ENCODE measurements at regions of chr17 and their contacts with region 1.

Region 1: DNA sequence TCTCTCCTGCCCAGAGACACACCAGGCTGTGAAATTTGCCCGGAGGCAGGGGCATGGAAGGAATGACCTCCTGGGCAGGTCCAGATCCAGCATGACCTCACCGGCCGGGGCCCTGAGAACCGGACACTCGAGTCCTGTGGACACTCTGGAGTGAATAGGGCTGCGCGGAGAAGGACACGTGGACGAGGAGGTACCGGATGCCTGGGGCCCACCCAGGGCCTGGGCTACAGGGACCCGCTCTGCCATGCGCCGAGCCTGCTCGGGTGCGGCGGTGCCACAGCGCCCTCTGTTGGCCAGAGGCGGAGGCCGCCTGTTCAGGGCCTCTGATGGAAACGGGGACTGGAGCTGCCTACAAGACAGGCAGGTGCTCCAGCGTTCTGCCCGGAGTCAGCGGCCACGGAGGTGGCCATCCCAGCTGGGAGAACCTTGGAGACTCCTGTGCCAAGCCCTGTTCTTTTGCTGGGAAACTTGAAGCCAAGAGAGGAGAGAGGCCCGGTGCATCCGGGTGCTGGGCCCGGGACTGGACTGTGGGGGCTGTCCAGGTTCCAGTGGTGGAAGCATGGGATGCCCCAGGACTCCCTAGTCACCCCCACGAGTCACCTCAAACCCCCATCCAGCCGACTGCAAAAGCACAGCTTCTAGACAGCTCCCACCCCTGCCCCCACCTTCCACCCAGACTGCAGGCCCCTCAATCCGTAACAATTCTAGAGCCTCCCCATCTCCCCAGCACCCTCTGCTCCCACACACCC is 19.3 kb upstream of the NXPH3 start:
- DNase-seq: peak; percentile 72
- H3K4me3 ChIP-seq: no peak overlapping the region
- H3K27ac ChIP-seq: no peak overlapping the region
- H3K4me1 ChIP-seq: no peaks in the 10 kb centered on the region
- H3K27me3 ChIP-seq: no peaks in the 10 kb centered on the region
- CTCF ChIP-seq: peak; percentile 99

Region 2: DNA sequence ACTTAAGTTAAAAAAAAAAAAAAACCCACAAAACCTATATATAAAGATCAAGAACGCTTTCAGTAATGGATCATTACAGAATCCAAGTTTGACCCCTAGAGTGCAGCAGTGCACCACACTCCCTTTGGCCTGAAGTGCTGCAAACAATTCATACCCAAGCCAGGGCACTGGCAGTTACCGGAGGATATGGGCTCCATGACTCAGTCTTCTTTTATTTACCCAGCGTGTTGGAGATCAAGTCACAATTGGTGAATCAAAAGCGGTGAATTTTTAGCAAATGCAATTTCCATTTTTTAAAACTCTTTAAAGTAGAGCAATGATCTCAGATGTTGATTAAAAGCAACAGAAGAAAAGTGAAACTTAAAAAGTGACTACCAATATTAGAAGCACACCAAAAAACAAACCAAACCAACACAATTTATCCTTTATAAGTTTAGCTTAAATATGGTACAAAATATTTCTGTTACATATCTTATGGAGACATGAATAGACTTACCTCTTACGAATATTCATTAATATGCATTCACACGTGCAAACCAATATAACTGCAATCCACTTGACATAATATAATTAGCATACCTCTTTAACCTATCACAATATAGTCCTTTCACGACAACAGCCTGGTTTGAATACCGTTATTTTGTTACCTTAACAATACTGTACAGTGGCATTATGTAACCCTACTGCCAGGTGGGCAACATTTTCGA is 240.7 kb before region 1 on chr17:
- intact Hi-C with region 1: loop called (anchors 10 kb)
- DNase-seq: peak; percentile 80
- H3K4me3 ChIP-seq: no peak overlapping the region
- H3K27ac ChIP-seq: no peak overlapping the region
- H3K4me1 ChIP-seq: peaks cover 6% of the 10 kb centered on the region
- H3K27me3 ChIP-seq: no peaks in the 10 kb centered on the region
- CTCF ChIP-seq: peak; percentile 65

Region 3: DNA sequence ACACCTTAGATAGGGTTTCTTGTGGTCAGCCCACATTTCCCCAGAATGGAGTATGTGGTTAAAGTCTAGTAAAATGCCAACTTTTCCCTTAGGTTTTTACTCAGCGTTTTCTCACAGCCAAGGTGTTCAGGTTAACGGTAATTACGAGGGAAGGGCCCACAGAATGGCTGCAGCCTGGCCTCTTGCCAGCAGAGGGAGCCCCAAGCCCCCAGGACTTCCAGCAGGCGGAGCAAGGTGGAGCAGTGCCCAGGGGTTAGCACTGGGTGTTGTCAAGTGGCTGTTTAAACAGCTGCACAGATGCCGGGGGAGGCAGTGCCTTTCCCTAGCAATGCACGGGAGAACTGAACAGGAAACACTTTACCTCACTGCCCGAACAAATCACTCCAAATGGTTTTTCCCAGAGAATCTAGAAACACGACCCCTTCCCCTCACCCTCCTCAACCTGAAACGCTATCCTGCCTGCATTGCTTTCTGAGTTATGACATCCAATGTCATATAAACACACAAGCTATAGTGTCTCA is 148.4 kb before region 1 on chr17:
- intact Hi-C with region 1: loop called (anchors 2 kb)
- DNase-seq: peak; percentile 91
- H3K4me3 ChIP-seq: no peak overlapping the region
- H3K27ac ChIP-seq: peak overlapping the region; percentile 60
- H3K4me1 ChIP-seq: peaks cover 8% of the 10 kb centered on the region
- H3K27me3 ChIP-seq: no peaks in the 10 kb centered on the region
- CTCF ChIP-seq: peak; percentile 86

Region 4: DNA sequence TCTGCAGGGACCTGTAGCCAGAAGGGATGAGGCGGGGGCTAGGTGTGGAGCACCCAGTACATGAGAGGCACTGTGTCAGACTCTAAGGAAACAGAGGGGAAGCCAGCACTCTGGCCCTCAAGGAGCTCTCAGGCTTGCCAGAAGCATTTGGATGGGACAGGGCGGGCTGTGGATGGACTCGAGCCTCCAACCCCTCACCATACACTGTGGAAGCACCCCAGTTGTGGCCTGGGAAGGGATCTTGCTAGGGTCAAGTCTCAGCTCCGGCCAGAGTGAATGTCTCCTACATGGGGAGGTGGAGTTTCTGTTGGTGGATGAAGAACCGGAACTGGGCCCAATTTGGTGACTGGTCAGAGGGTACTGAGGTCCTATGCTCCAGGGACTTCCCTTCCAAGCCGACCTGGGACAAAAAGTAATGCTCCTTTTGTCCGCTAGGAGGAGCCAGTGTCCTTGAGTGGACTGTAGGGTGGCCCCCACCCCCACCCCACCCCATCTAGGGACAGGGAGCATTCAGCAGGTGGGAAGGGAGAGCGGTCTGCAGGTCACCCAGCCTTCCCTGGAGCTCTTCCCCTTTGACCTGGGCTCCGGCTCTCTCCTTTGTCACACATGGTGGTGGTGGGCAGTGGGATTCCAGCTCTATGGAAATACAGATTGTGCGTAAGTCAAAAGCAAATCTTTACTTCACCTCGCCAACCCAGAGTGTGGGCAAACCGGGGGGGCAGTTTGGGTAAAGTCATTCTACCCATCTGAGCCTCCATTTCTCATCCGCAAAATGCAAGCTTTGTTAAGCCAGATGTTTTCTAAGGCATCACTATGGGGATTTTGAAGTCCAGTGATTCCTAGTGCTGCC is 121.4 kb before region 1 on chr17:
- intact Hi-C with region 1: loop called (anchors 2 kb)
- DNase-seq: peak; percentile 48
- H3K4me3 ChIP-seq: no peak overlapping the region
- H3K27ac ChIP-seq: no peak overlapping the region
- H3K4me1 ChIP-seq: no peaks in the 10 kb centered on the region
- H3K27me3 ChIP-seq: peaks cover 10% of the 10 kb centered on the region
- CTCF ChIP-seq: peak; percentile 55

Region 5: GRCh38 chr17:49496183-49496866 is 60.1 kb before region 1 on chr17:
- intact Hi-C with region 1: loop called (anchors 2 kb)
- DNase-seq: peak; percentile 76
- H3K4me3 ChIP-seq: peak overlapping the region; percentile 47
- H3K27ac ChIP-seq: no peak overlapping the region
- H3K4me1 ChIP-seq: peaks cover 16% of the 10 kb centered on the region
- H3K27me3 ChIP-seq: peaks cover 51% of the 10 kb centered on the region
- CTCF ChIP-seq: peak; percentile 89

Region 6: DNA sequence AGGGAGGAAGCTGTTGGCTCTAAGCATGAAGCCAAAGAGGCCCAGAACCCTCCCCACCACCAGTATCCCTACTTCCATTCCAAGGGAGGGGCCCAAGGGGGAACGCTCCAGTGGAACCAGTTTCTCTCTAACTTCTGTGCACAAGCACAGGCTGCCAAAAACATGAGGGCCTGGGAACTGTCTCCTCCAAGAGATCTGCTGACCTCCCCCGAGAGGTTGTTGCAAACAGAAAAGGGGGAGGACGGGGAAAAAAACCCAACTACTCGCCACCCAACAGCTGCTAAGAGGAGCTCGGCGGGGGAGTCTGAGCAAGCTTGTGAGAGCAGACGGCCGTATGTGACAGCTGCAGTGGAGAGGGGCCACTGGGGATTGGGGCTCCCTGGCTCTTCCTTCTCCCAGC is 167.0 kb after region 1 on chr17:
- intact Hi-C with region 1: no loop called
- DNase-seq: peak; percentile 47
- H3K4me3 ChIP-seq: no peak overlapping the region
- H3K27ac ChIP-seq: peak overlapping the region; percentile 53
- H3K4me1 ChIP-seq: no peaks in the 10 kb centered on the region
- H3K27me3 ChIP-seq: no peaks in the 10 kb centered on the region
- CTCF ChIP-seq: no peak

Measured in colonic mucosa (tissue), 4 donors.